Heart left ventricle (tissue), 16 donors: ENCODE measurements at regions of chr9 and their contacts with region 1.

Region 1: GRCh38 chr9:87749335-87750035 is 23.6 kb downstream of the CTSL start:
- DNase-seq: no peak
- ATAC-seq: peak in 2 of 4 donors; percentile 62 to 94
- H3K4me3 ChIP-seq: no peak overlapping the region
- H3K27ac ChIP-seq: peak overlapping the region in 9 of 12 donors; percentile 8 to 64 (median 37)
- H3K4me1 ChIP-seq: peaks cover 0 to 6% (median 0%) of the 10 kb centered on the region in 12 donors
- H3K27me3 ChIP-seq: peaks cover 0 to 9% (median 0%) of the 10 kb centered on the region in 9 donors
- CTCF ChIP-seq: no peak
- POLR2A ChIP-seq: no peak

Region 2: DNA sequence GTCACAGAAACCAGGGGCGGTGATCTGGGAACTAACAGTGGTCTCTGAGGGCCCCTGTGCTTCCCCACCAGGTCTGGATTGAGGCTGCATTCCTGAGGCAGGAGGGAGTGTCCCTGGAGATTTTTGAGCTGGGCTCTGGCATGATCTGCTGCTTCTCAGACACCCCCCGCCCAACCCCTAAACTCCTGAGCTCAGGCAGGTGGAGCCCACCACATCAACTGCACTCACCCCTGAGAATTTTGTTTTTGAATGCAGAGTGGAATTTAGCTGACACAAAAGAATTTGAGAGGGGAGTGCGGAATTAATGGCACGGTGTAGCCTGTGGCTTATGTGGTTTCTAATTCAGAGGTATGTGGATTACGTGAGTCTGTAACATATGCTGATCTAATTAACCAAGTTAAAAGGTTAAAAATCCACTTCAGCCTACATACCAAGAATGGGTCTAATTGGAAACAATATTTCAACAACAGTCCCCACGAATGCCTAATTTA is 47.5 kb before region 1 on chr9:
- intact Hi-C with region 1: loop called in 1 of 10 experiments (anchors 10 kb)
- DNase-seq: no peak
- ATAC-seq: no peak
- H3K4me3 ChIP-seq: no peak overlapping the region
- H3K27ac ChIP-seq: no peak overlapping the region
- H3K4me1 ChIP-seq: no peaks in the 10 kb centered on the region
- H3K27me3 ChIP-seq: no peaks in the 10 kb centered on the region
- CTCF ChIP-seq: no peak
- POLR2A ChIP-seq: no peak

Region 3: DNA sequence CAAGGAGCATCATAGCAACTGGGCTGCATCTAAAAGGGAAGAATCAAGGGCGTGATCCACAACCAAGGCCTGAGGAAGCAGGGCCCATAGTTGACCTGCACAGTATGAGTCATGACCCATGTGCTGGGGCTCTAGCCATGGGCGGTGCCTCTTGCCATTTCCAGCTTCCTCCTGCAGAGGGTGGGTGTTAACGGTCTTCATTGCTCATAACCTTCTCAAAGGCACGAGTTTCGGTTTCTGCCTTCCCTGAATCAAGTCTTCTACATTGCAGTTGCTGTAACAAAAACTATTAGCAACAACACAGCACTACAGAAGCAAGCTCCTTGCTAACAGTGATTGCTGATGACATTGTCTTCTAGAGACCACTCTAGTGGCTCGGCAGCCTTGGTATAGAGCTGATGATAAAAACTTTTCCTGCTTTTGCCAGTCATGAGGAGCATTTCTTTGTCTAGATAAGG is 43.4 kb after region 1 on chr9:
- intact Hi-C with region 1: loop called in 1 of 10 experiments (anchors 5 kb)
- DNase-seq: peak; percentile 71 to 84 (median 75)
- ATAC-seq: peak; percentile 89 to 99 (median 98)
- H3K4me3 ChIP-seq: peak overlapping the region in 1 of 12 donors; percentile 16
- H3K27ac ChIP-seq: peak overlapping the region in 10 of 12 donors; percentile 8 to 93 (median 53)
- H3K4me1 ChIP-seq: peaks cover 0 to 40% (median 0%) of the 10 kb centered on the region in 12 donors
- H3K27me3 ChIP-seq: no peaks in the 10 kb centered on the region
- CTCF ChIP-seq: peak in 6 of 12 donors; percentile 15 to 39 (median 26)
- POLR2A ChIP-seq: no peak